ENCODE measurements at regions of chr3 and their contacts with region 1.

Region 1: DNA sequence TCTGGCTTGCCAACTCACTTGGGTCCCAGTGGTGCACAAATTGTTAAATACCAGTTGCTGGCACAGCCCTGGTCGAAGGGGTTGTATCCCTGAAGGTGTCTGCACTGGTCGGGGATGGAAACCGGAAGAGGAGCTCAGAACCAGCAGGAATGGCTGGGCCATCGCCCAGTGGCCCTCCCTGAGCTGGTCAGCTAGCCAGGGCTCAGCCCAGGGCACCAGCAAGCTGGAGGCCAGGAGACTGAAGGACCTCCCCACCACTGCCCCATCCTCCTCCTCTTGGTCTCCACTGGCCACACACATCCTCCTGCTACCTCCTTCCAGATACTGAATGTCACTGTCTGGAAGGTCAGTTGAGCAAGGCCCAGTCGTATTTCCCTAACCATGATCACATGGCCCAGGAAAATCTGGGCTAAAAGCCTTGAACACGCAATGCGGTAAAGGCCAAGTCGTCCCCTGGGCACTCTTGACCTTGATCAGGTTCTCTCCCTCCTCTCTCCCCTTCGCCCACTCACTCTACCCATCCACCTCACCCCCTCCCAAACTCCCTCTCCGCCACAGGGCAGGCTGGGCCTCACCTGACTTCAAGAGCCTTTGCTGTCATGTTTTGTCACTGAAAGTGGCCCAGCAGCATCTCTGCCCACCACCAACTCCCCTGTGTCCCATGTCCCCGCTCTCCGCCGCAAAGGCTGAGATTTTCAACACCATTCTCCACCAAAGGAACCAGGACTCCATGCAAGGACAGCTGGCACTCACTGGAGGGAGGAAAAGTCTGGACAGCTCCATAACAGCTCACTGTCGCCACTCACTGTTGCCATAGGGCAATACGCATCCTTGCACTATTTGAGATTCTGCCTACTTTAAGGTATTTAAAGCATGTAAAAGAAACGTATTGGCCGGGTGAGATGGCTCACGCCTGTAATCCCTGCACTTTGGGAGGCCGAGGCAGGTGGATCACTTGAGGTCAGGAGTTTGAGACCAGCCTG is 12.1 kb downstream of the ZDHHC19 start:
- DNase-seq: no peak
- H3K4me3 ChIP-seq: no peak overlapping the region
- H3K27ac ChIP-seq: no peak overlapping the region
- H3K4me1 ChIP-seq: no peaks in the 10 kb centered on the region
- H3K27me3 ChIP-seq: no peaks in the 10 kb centered on the region
- CTCF ChIP-seq: no peak
- POLR2A ChIP-seq: no peak

Region 2: GRCh38 chr3:196073188-196073838 is 125.7 kb before region 1 on chr3:
- intact Hi-C with region 1: loop called (anchors 5 kb)
- DNase-seq: peak in 1 of 2 donors; percentile 59
- H3K4me3 ChIP-seq: no peak overlapping the region
- H3K27ac ChIP-seq: no peak overlapping the region
- H3K4me1 ChIP-seq: no peaks in the 10 kb centered on the region
- H3K27me3 ChIP-seq: no peaks in the 10 kb centered on the region
- CTCF ChIP-seq: peak; percentile 63 to 91 (median 76)
- POLR2A ChIP-seq: no peak